A673 (cell line): ENCODE measurements at regions of chr11 and their contacts with region 1.

Region 1: GRCh38 chr11:46593550-46594373 is at the start of gene AMBRA1:
- DNase-seq: peak; percentile 99
- H3K4me3 ChIP-seq: peak within 1 kb of the TSS; percentile 78
- H3K27ac ChIP-seq: peak within 1 kb of the TSS; percentile 84
- H3K4me1 ChIP-seq: peaks cover 33% of the 10 kb centered on the region
- H3K27me3 ChIP-seq: no peaks in the 10 kb centered on the region
- CTCF ChIP-seq: no peak
- total RNA-seq, gene AMBRA1: 69.9 and 78.1 TPM in 2 replicates

Region 2: GRCh38 chr11:46100670-46101069 is 493.1 kb before region 1 on chr11:
- CTCF ChIA-PET with region 1: no interaction called
- POLR2A ChIA-PET with region 1: interaction called, 10 read pairs
- intact Hi-C with region 1: no loop called
- DNase-seq: no peak
- H3K4me3 ChIP-seq: no peak overlapping the region
- H3K27ac ChIP-seq: peak overlapping the region; percentile 3
- H3K4me1 ChIP-seq: peaks cover 52% of the 10 kb centered on the region
- H3K27me3 ChIP-seq: no peaks in the 10 kb centered on the region
- CTCF ChIP-seq: no peak

Region 3: GRCh38 chr11:47213985-47214564 is 620.3 kb after region 1 on chr11:
- CTCF ChIA-PET with region 1: no interaction called
- POLR2A ChIA-PET with region 1: interaction called, 13 read pairs
- intact Hi-C with region 1: no loop called
- DNase-seq: peak; percentile 99
- H3K4me3 ChIP-seq: peak overlapping the region; percentile 62
- H3K27ac ChIP-seq: peak overlapping the region; percentile 86
- H3K4me1 ChIP-seq: peaks cover 16% of the 10 kb centered on the region
- H3K27me3 ChIP-seq: no peaks in the 10 kb centered on the region
- CTCF ChIP-seq: no peak